ENCODE measurements at regions of chr11 and their contacts with region 1.

Region 1: GRCh38 chr11:46987183-46987582 is 50.6 kb downstream of the CSTPP1 start:
- DNase-seq: no peak
- H3K4me3 Mint-ChIP-seq: no peak overlapping the region
- H3K27ac Mint-ChIP-seq: no peak overlapping the region
- H3K4me1 Mint-ChIP-seq: no peaks in the 10 kb centered on the region
- H3K27me3 Mint-ChIP-seq: no peaks in the 10 kb centered on the region
- CTCF ChIP-seq: no peak

Region 2: DNA sequence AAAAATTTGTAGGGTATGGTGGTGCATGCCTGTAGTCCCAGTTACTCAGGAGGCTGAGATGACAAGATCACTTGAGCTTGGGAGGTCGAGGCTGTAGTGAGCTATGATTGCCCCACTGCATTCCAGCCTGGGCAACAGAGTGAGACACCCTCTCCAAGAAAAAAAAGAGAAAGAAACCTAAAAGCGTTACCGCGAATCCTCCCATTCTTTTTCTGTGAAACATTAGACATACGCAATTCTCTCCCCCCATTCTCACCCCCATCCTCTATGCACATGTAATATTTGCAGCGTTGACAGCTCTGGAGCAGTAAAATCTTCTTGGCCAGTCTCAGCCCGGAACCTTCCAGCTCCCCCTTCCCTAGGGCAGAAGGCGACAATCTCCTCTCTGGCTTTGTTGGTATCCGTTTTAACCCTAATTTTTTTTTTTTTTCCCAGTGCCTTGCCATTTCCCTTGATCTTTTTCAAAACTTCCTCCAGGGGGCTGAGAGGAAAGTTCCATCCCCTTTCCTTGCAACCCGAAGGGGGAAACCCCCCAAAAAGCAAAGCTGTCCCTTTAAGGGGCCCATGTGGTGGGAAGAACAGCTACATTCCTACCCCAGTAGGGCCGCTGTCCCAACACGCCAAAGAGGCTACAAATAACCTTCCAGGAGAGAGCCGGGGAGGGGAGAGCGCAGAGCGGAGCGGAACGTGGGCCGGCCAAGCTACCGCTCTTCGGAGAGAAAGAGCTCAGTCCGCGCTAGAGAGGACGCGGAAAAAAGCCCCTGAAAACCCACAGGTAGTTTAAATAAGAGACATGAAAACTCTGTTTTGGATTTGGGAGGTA is 70.7 kb before region 1 on chr11:
- CTCF ChIA-PET with region 1: no interaction called
- intact Hi-C with region 1: loop called (anchors 10 kb)
- DNase-seq: peak; percentile 26
- H3K4me3 Mint-ChIP-seq: peak overlapping the region; percentile 56
- H3K27ac Mint-ChIP-seq: no peak overlapping the region
- H3K4me1 Mint-ChIP-seq: peaks cover 12% of the 10 kb centered on the region
- H3K27me3 Mint-ChIP-seq: peaks cover 78% of the 10 kb centered on the region
- CTCF ChIP-seq: no peak

Measured in Calu3 (cell line).